Panc1 (cell line): ENCODE measurements at regions of chr17 and their contacts with region 1.

Region 1: GRCh38 chr17:68462381-68463210 is 5.3 kb upstream of the WIPI1 start:
- DNase-seq: no peak
- ATAC-seq: peak; percentile 95
- H3K4me3 ChIP-seq: no peak overlapping the region
- H3K27ac ChIP-seq: no peak overlapping the region
- H3K4me1 ChIP-seq: no peaks in the 10 kb centered on the region; the same call in none of the 2 replicates
- H3K27me3 ChIP-seq: no peaks in the 10 kb centered on the region
- CTCF ChIP-seq: peak; percentile 71

Region 2: GRCh38 chr17:67959288-67959900 is 503.2 kb before region 1 on chr17:
- CTCF ChIA-PET with region 1: interaction called, 3 read pairs
- POLR2A ChIA-PET with region 1: no interaction called
- in situ Hi-C with region 1: no loop called
- intact Hi-C with region 1: loop called (anchors 10 kb)
- DNase-seq: no peak
- ATAC-seq: no peak
- H3K4me3 ChIP-seq: no peak overlapping the region
- H3K27ac ChIP-seq: no peak overlapping the region
- H3K4me1 ChIP-seq: no peaks in the 10 kb centered on the region
- H3K27me3 ChIP-seq: no peaks in the 10 kb centered on the region
- CTCF ChIP-seq: no peak

Region 3: GRCh38 chr17:68057531-68057952 is 405.1 kb before region 1 on chr17:
- CTCF ChIA-PET with region 1: no interaction called
- POLR2A ChIA-PET with region 1: no interaction called
- in situ Hi-C with region 1: no loop called
- intact Hi-C with region 1: loop called (anchors 10 kb)
- DNase-seq: no peak
- ATAC-seq: peak; percentile 71
- H3K4me3 ChIP-seq: no peak overlapping the region
- H3K27ac ChIP-seq: no peak overlapping the region
- H3K4me1 ChIP-seq: no peaks in the 10 kb centered on the region
- H3K27me3 ChIP-seq: no peaks in the 10 kb centered on the region
- CTCF ChIP-seq: peak; percentile 72

Region 4: DNA sequence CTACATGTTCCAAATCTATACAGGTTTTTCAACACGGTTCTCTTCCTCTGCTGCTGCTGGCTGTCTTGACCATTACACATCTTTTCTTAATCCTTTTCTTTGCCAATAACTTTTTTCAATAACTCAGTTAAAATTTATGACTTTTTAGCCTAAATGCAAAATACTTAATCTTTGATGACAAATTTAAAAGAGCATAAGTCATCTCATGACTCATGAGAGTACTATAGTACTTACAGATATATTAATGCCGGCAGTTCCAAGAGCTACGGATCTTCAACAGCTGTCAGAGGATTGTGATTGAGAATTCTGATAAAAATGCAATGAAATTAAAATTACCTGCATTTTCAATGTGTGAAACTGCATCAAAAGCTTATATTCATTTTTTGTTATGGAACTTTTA is 321.5 kb before region 1 on chr17:
- CTCF ChIA-PET with region 1: no interaction called
- POLR2A ChIA-PET with region 1: no interaction called
- in situ Hi-C with region 1: no loop called
- intact Hi-C with region 1: no loop called
- DNase-seq: no peak
- ATAC-seq: no peak
- H3K4me3 ChIP-seq: no peak overlapping the region
- H3K27ac ChIP-seq: no peak overlapping the region
- H3K4me1 ChIP-seq: no peaks in the 10 kb centered on the region
- H3K27me3 ChIP-seq: no peaks in the 10 kb centered on the region
- CTCF ChIP-seq: no peak

Region 5: GRCh38 chr17:68172461-68172954 is 290.1 kb before region 1 on chr17:
- CTCF ChIA-PET with region 1: no interaction called
- POLR2A ChIA-PET with region 1: no interaction called
- in situ Hi-C with region 1: no loop called
- intact Hi-C with region 1: loop called (anchors 10 kb)
- DNase-seq: peak; percentile 46
- ATAC-seq: peak; percentile 91; the same call in 1 of the 2 replicates
- H3K4me3 ChIP-seq: no peak overlapping the region
- H3K27ac ChIP-seq: no peak overlapping the region
- H3K4me1 ChIP-seq: no peaks in the 10 kb centered on the region
- H3K27me3 ChIP-seq: no peaks in the 10 kb centered on the region
- CTCF ChIP-seq: peak; percentile 97

Region 6: DNA sequence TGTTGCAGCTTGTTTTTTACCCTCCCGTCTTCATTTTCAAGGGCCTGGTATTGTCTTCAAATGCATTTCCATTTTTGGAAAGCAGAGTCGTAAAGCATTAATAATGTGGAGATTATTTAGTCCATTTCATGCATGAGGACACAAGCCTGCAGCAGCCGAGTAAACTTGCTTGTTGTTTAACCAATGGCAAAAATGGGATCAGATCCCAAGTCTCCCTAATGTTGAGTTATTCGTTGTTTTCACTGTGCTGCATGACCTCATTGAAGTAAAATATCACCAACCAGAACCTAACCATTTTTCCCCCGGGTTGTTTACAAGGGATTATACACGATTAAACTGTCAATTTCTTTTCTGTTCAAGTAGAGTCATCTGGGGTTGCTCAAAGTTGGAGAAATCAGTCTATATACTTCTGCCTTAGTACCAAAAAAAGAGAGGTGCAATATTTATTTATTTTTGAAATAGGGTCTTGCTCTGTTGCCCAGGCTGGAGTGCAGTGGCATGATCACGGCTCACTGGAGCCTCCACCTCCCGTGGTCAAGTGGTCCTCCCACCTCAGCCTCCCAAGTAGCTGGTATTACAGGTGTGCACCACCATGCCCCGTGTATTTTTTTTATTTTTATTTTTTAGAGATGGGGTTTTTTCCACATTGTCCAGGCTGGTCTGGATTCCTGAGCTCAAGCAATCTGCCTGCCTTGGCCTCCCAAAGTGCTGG is 202.4 kb before region 1 on chr17:
- CTCF ChIA-PET with region 1: no interaction called
- POLR2A ChIA-PET with region 1: no interaction called
- in situ Hi-C with region 1: no loop called
- intact Hi-C with region 1: loop called (anchors 2 kb)
- DNase-seq: no peak
- ATAC-seq: no peak
- H3K4me3 ChIP-seq: no peak overlapping the region
- H3K27ac ChIP-seq: no peak overlapping the region
- H3K4me1 ChIP-seq: no peaks in the 10 kb centered on the region; the same call in 1 of the 2 replicates
- H3K27me3 ChIP-seq: no peaks in the 10 kb centered on the region
- CTCF ChIP-seq: no peak

Region 7: GRCh38 chr17:68759343-68760132 is 296.9 kb after region 1 on chr17:
- CTCF ChIA-PET with region 1: no interaction called
- POLR2A ChIA-PET with region 1: no interaction called
- in situ Hi-C with region 1: no loop called
- intact Hi-C with region 1: loop called (anchors 10 kb)
- DNase-seq: peak; percentile 58
- ATAC-seq: peak; percentile 98
- H3K4me3 ChIP-seq: peak overlapping the region; percentile 40 to 68
- H3K27ac ChIP-seq: peak overlapping the region; percentile 86
- H3K4me1 ChIP-seq: peaks cover 6% of the 10 kb centered on the region; the same call in 1 of the 2 replicates
- H3K27me3 ChIP-seq: no peaks in the 10 kb centered on the region
- CTCF ChIP-seq: peak; percentile 87